ENCODE measurements at regions of chr22 and their contacts with region 1.

Region 1: DNA sequence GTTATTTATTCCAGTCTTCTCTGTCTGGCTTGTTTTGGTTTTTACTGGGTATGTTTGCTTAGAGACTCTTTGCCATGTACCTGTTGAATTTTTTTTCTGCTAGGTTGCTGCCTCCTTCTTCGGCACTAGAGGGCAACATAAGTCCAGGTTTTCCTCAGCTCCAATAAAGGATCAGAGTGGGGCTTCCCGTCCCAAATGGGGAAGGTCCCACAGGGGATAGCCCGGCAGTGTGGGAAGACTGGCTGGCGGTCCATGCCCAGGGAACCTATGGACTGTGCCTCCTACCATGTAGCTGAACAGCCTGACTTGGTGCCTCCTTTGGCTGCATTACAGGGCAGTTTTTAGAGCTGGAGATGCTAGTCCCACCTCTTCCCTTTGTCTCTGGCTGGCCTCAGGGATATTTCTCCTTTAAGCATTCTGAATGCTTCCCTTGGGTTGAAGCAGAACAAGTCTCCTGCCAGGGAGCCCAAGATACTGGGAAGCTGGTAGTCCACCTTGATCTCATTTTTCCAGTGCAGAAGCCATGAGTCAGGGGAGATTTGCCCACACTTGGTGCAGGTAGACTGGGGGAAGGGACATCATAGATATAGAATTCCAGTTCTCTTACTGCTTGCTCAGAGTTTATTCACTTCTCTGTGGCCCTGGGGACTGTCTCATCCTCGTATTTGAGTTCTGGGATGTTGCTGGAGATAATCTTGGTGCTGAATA is 60.2 kb downstream of the BRD1 start:
- DNase-seq: peak; percentile 42
- ATAC-seq: peak; percentile 65
- H3K4me3 ChIP-seq: no peak overlapping the region
- H3K27ac ChIP-seq: no peak overlapping the region
- H3K4me1 ChIP-seq: no peaks in the 10 kb centered on the region
- H3K27me3 ChIP-seq: no peaks in the 10 kb centered on the region
- CTCF ChIP-seq: peak; percentile 77 to 94 (median 86)
- POLR2A ChIP-seq: no peak
- RAD21 ChIP-seq: peak; percentile 89

Region 2: GRCh38 chr22:49676783-49677494 is 90.6 kb before region 1 on chr22:
- CTCF ChIA-PET with region 1: no interaction called
- POLR2A ChIA-PET with region 1: no interaction called
- RAD21 ChIA-PET with region 1: no interaction called
- intact Hi-C with region 1: no loop called
- DNase-seq: no peak
- ATAC-seq: no peak
- H3K4me3 ChIP-seq: no peak overlapping the region
- H3K27ac ChIP-seq: no peak overlapping the region
- H3K4me1 ChIP-seq: no peaks in the 10 kb centered on the region
- H3K27me3 ChIP-seq: peaks cover 52% of the 10 kb centered on the region
- CTCF ChIP-seq: no peak
- POLR2A ChIP-seq: no peak
- RAD21 ChIP-seq: no peak

Region 3: GRCh38 chr22:49779853-49780697 is 12.6 kb after region 1 on chr22:
- CTCF ChIA-PET with region 1: no interaction called
- POLR2A ChIA-PET with region 1: no interaction called
- RAD21 ChIA-PET with region 1: no interaction called
- intact Hi-C with region 1: no loop called
- DNase-seq: no peak
- ATAC-seq: no peak
- H3K4me3 ChIP-seq: no peak overlapping the region
- H3K27ac ChIP-seq: no peak overlapping the region
- H3K4me1 ChIP-seq: no peaks in the 10 kb centered on the region
- H3K27me3 ChIP-seq: no peaks in the 10 kb centered on the region
- CTCF ChIP-seq: no peak
- POLR2A ChIP-seq: no peak
- RAD21 ChIP-seq: no peak

Region 4: GRCh38 chr22:49917974-49918910 is 150.7 kb after region 1 on chr22 and contains the starts of genes ALG12 and CRELD2:
- CTCF ChIA-PET with region 1: interaction called, 9 read pairs
- POLR2A ChIA-PET with region 1: no interaction called
- RAD21 ChIA-PET with region 1: no interaction called
- intact Hi-C with region 1: loop called (anchors 5 kb)
- DNase-seq: peak; percentile 87
- ATAC-seq: peak; percentile 95
- H3K4me3 ChIP-seq: peak within 1 kb of the TSS; percentile 76 to 82
- H3K27ac ChIP-seq: peak within 1 kb of the TSS; percentile 93
- H3K4me1 ChIP-seq: peaks cover 7 to 16% of the 10 kb centered on the region in 2 experiments; a peak in 3 of 4 replicates
- H3K27me3 ChIP-seq: no peaks in the 10 kb centered on the region
- CTCF ChIP-seq: no peak
- POLR2A ChIP-seq: peak; percentile 61
- RAD21 ChIP-seq: no peak
- total RNA-seq, gene ALG12: 16.6 TPM
- total RNA-seq, gene CRELD2: 45.8 TPM

Measured in HCT116 (cell line).